A673 (cell line): ENCODE measurements at regions of chr16 and their contacts with region 1.

Region 1: GRCh38 chr16:4123616-4124265 is 7.5 kb upstream of the ADCY9 start:
- DNase-seq: no peak
- H3K4me3 ChIP-seq: no peak overlapping the region
- H3K27ac ChIP-seq: no peak overlapping the region
- H3K4me1 ChIP-seq: no peaks in the 10 kb centered on the region
- H3K27me3 ChIP-seq: no peaks in the 10 kb centered on the region
- CTCF ChIP-seq: no peak

Region 2: DNA sequence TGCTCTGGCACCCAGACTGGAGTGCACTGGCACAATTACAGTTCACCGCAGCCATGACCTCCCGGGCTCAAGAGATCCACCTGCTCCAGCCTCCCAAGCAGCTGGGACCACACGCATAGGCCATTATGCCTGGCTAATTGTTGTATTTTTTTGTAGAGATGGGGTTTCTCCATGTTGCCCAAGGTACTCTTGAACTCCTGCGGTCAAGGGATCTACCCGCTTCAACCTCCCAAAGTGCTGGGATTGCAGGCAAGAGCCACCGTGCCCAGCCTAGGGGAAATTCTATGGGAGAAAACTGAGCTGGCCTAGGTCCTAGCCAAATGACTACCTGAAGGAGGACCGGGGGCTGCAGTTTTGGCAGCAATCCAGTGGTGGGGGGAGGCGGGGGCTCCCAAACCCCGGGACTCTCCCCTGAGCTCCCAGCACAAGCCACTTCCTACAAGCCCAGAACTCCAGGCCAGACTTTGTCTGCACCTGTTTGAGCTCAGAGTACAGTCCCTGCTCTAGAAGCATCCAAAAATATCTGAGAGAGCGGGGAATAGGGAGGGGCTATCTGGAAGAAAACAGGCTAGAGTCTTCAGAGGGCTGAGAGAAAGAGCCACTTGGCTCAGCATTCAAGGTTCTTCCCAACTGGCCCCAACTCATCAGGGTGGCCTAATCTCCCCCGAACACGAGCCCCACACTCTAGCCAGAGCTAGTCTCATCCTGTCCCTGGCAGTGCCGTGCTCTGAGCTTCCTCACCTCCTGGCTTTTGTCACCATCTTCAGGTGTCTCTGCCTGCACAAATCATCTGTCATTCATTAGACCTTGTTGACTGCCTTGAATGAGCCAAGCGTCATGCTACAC is 109.0 kb after region 1 on chr16:
- CTCF ChIA-PET with region 1: no interaction called
- POLR2A ChIA-PET with region 1: no interaction called
- intact Hi-C with region 1: loop called (anchors 10 kb)
- DNase-seq: no peak
- H3K4me3 ChIP-seq: no peak overlapping the region
- H3K27ac ChIP-seq: no peak overlapping the region
- H3K4me1 ChIP-seq: no peaks in the 10 kb centered on the region
- H3K27me3 ChIP-seq: no peaks in the 10 kb centered on the region
- CTCF ChIP-seq: no peak